ENCODE measurements at regions of chr5 and their contacts with region 1.

Region 1: DNA sequence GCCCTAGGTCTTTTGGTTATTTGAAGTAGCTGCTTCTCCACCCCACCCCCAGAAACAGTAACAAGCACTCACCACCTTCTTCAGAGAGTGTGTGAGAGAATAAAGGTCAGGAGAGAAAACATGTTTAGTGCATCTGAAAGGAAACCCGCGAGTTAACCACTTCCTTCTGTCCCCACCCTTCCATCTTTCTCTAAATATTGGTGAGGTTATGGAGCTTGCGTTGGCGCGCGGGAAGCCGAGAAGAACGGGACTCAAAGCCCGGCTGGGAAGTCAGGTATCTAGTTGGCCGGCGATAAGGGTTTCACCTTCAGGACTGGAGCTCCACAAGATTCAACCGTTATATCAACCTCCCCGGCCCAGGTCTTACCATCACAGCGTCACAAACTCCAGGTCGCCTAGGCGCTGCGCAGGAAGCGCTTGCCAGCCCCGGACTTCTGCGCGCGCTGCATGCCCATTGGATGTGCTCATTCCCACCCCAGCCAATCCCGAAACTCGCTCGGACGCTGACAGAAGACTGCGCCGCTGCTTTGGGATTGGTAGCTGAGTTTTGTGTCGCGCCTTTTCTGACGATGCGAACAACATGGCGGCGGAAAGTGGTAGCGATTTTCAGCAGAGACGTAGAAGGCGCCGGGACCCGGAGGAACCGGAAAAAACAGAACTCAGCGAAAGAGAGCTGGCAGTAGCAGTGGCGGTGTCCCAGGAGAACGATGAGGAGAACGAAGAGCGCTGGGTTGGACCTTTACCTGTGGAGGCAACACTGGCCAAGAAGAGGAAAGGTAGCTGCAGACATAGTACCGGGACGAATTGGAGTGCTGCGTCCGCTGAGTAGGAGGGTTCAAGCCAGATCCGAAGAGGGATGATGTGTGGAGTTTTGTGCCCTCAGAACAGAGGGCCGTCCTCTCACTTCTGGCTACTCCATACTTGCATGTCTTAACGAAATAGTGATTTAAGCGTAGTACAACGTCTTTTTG is at the starts of genes CENPK and PPWD1:
- DNase-seq: peak; percentile 94
- ATAC-seq: peak; percentile 100
- H3K4me3 ChIP-seq: peak within 1 kb of the TSS; percentile 71
- H3K27ac ChIP-seq: peak within 1 kb of the TSS; percentile 81
- H3K4me1 ChIP-seq: no peaks in the 10 kb centered on the region; the same call in 1 of the 2 replicates
- H3K27me3 ChIP-seq: no peaks in the 10 kb centered on the region
- CTCF ChIP-seq: no peak
- POLR2A ChIP-seq: peak; percentile 81
- RAD21 ChIP-seq: no peak
- total RNA-seq, gene CENPK: 5.6 and 13.6 TPM in 2 replicates
- total RNA-seq, gene PPWD1: 17.9 and 30.8 TPM in 2 replicates

Region 2: GRCh38 chr5:65086234-65086890 is 476.7 kb before region 1 on chr5:
- CTCF ChIA-PET with region 1: no interaction called
- POLR2A ChIA-PET with region 1: interaction called, 10 read pairs
- dilution Hi-C with region 1: no loop called
- in situ Hi-C with region 1: no loop called
- intact Hi-C with region 1: no loop called
- DNase-seq: peak; percentile 48
- ATAC-seq: no peak
- H3K4me3 ChIP-seq: no peak overlapping the region
- H3K27ac ChIP-seq: no peak overlapping the region
- H3K4me1 ChIP-seq: no peaks in the 10 kb centered on the region
- H3K27me3 ChIP-seq: no peaks in the 10 kb centered on the region
- CTCF ChIP-seq: no peak
- POLR2A ChIP-seq: no peak
- RAD21 ChIP-seq: no peak